Activated CD8-positive, alpha-beta T cell treated with anti-CD3 and anti-CD28 coated beads for 36 hours (primary cell): ENCODE measurements at regions of chr17 and their contacts with region 1.

Region 1: DNA sequence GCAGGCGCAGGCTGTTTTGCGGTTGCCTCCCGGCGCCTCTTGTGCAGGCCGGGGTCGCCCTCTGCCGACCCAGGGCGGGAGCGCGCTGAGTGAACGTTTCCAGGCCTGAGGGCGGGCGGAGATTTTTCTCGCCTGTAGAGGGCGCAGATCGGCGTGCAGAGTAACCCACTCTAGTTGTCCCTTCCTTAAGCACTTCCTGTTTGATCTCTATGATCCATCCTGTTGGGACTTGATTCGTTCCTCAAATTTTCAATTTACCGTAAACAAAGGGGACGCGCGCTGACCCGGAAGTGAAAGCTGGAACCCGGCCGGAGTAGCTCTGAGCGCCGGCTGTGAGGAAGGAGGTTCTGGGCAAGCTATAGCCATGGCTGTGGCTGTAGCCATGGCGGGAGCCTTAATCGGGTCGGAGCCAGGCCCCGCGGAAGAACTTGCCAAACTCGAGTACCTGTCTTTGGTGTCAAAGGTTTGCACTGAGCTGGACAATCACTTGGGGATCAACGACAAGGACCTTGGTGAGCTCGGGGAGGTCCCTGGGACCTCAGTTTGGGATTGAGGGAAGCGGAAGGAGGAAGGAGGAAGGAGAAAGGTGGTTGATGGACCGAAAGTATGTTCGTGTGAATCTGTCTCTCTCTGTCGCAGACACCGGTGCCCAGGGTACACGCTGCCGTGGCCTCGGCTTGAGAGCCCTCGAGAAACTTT is at the start of gene DHX8:
- DNase-seq: peak; percentile 99
- ATAC-seq: peak; percentile 98
- H3K4me3 Mint-ChIP-seq: peak within 1 kb of the TSS; percentile 100
- H3K27ac Mint-ChIP-seq: peak within 1 kb of the TSS; percentile 98
- H3K4me1 Mint-ChIP-seq: peaks cover 30% of the 10 kb centered on the region
- H3K27me3 Mint-ChIP-seq: no peaks in the 10 kb centered on the region
- CTCF ChIP-seq: peak; percentile 99
- total RNA-seq, gene DHX8: 43.0 to 45.1 TPM

Region 2: DNA sequence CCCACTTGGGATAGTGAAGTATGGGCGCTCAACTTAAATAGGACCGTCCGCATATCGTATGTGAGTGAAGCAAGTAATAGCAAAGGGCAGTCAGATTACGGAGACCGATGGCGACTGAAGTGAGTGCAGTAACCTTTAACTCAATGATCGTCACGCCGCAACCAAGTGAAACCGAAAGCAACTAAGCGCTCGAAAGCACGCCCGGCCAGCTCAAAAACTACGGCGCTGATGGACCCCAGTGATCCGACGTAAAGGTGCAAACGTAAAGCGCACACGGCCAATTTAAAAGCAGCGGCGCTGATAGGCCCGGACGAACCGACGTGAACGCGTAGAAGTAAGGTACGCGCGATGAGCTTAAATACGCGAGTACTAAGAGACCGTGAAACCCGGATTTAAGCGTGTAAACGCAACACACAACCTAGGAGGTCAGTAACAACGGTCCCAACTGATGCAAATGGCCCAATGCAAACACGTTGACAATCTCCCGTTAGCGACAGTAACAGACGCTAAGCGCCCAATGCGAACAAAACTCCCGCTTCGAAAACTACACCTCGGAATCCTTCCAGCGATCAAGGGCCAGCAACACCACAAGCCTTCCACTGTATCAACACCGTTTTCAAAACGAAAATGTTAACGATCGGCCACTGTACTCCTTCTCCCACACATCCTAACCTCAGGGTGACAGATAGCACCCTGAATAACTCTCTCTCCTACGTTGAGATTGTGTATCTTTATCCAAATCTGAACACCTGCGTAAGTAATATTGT is 122.9 kb before region 1 on chr17:
- CTCF ChIA-PET with region 1: interaction called, 34 read pairs
- POLR2A ChIA-PET with region 1: interaction called, 27 read pairs
- intact Hi-C with region 1: no loop called
- DNase-seq: peak; percentile 97
- ATAC-seq: peak; percentile 86
- H3K4me3 Mint-ChIP-seq: peak overlapping the region; percentile 83
- H3K27ac Mint-ChIP-seq: peak overlapping the region; percentile 99
- H3K4me1 Mint-ChIP-seq: peaks cover 43% of the 10 kb centered on the region
- H3K27me3 Mint-ChIP-seq: peaks cover 4% of the 10 kb centered on the region
- CTCF ChIP-seq: no peak

Region 3: GRCh38 chr17:43381204-43381603 is 102.6 kb before region 1 on chr17:
- CTCF ChIA-PET with region 1: interaction called, 63 read pairs
- POLR2A ChIA-PET with region 1: interaction called, 5 read pairs
- intact Hi-C with region 1: no loop called
- DNase-seq: no peak
- ATAC-seq: no peak
- H3K4me3 Mint-ChIP-seq: no peak overlapping the region
- H3K27ac Mint-ChIP-seq: no peak overlapping the region
- H3K4me1 Mint-ChIP-seq: no peaks in the 10 kb centered on the region
- H3K27me3 Mint-ChIP-seq: no peaks in the 10 kb centered on the region
- CTCF ChIP-seq: no peak

Region 4: GRCh38 chr17:43393944-43394482 is 89.8 kb before region 1 on chr17:
- CTCF ChIA-PET with region 1: interaction called, 338 read pairs
- POLR2A ChIA-PET with region 1: interaction called, 54 read pairs
- intact Hi-C with region 1: loop called (anchors 1 kb)
- DNase-seq: peak; percentile 97
- ATAC-seq: peak; percentile 41
- H3K4me3 Mint-ChIP-seq: no peak overlapping the region
- H3K27ac Mint-ChIP-seq: peak overlapping the region; percentile 20
- H3K4me1 Mint-ChIP-seq: peaks cover 15% of the 10 kb centered on the region
- H3K27me3 Mint-ChIP-seq: no peaks in the 10 kb centered on the region
- CTCF ChIP-seq: peak; percentile 87

Region 5: DNA sequence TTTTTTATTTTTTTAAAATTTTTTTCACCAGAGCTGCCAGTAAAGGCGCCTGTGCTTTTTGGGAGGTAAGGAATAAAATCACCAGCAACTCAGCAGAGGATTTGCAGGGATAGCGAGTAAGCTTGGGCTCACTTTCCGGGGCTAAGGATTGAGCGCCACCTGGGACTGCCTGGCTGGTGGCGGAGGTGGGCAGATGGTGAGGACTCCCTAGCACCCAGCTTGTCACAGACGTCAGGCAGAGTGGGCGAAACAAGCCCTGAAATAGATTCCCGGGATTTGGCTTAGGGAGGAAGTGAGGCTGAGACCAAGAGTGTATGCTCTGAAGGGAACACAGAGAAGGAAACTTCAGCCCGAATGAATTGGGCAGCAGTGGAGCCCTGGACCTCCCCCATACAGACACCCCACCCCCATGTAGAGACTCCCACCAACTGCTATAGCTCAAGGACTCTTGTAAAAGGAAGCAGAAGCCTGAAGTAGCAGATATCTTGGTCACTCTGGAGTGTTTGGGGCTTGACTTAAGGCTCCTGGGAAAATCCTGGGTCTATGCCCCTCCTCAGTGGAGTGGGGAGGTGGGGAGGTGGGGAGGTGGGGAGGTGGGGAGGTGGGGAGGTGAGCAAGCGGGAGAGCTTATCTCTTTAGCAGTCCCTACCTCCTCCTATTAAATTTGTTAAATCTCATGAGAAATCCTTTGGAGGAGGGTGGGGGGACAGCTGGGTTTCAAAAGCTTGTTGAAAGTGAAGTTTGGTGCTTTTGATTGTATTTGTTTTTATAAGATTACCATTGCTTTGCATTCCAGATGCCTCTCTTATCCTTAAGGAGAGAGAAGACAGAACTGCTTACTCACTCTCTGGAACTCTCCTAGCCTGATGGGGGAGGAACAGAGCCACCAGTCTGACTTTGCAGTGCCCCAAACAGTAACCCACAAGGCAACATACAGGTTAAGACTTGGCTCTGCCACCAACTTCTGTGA is 76.9 kb before region 1 on chr17:
- CTCF ChIA-PET with region 1: interaction called, 35 read pairs
- POLR2A ChIA-PET with region 1: interaction called, 6 read pairs
- intact Hi-C with region 1: no loop called
- DNase-seq: no peak
- ATAC-seq: no peak
- H3K4me3 Mint-ChIP-seq: no peak overlapping the region
- H3K27ac Mint-ChIP-seq: no peak overlapping the region
- H3K4me1 Mint-ChIP-seq: no peaks in the 10 kb centered on the region
- H3K27me3 Mint-ChIP-seq: peaks cover 2% of the 10 kb centered on the region
- CTCF ChIP-seq: no peak

Region 6: GRCh38 chr17:43457362-43457692 is 26.5 kb before region 1 on chr17:
- CTCF ChIA-PET with region 1: interaction called, 11 read pairs
- POLR2A ChIA-PET with region 1: interaction called, 4 read pairs
- intact Hi-C with region 1: no loop called
- DNase-seq: no peak
- ATAC-seq: no peak
- H3K4me3 Mint-ChIP-seq: no peak overlapping the region
- H3K27ac Mint-ChIP-seq: no peak overlapping the region
- H3K4me1 Mint-ChIP-seq: peaks cover 9% of the 10 kb centered on the region
- H3K27me3 Mint-ChIP-seq: peaks cover 6% of the 10 kb centered on the region
- CTCF ChIP-seq: no peak

Region 7: DNA sequence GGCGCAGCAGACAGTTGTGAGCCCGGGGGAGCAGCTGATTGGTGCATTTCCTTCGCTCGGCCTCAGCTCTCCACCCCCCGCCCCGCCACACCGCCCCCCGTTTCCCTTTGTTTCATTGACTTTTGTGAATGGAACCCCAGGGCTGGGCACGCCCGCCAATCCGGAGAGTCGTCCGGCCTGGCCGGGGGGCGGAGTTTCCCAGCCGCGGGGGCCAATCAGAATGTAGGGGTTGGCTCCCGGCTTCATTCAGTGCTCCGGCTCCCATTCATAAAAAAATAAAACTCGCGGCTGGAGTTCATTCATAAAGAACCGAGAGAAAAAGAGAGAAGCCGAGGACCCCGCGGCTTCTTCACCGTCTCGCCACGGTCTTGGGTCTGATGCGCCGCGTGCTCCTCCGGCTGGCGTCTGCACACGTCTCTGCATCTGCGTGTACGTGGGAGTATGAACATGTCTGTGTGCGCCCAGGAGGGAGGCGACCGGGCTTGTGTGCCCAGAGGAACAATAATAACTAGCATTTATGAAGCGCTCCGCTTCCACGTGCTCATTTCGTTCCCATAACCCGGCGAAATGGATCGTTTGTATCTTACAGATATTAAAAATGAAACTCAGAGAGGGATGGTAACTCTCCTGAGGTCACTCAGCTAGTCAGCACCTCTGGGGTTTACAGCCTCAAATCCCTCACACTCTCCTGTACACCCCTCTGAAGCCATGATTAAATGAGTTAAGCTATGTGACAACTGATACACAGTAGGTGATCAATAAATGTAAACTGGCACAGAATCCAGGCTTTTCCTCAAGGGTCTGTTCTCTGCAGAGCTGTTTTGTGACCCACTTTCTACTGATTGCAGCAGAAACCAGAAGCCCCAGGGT is 62.7 kb after region 1 on chr17 and contains the start of gene ETV4:
- CTCF ChIA-PET with region 1: interaction called, 10 read pairs
- POLR2A ChIA-PET with region 1: interaction called, 3 read pairs
- intact Hi-C with region 1: no loop called
- DNase-seq: peak; percentile 98
- ATAC-seq: peak; percentile 93
- H3K4me3 Mint-ChIP-seq: peak within 1 kb of the TSS; percentile 76
- H3K27ac Mint-ChIP-seq: no peak within 1 kb of the TSS
- H3K4me1 Mint-ChIP-seq: peaks cover 21% of the 10 kb centered on the region
- H3K27me3 Mint-ChIP-seq: peaks cover 42% of the 10 kb centered on the region
- CTCF ChIP-seq: no peak
- total RNA-seq, gene ETV4: 5.0 to 5.4 TPM

Region 8: GRCh38 chr17:43599835-43600234 is 116.0 kb after region 1 on chr17:
- CTCF ChIA-PET with region 1: no interaction called
- POLR2A ChIA-PET with region 1: no interaction called
- intact Hi-C with region 1: no loop called
- DNase-seq: no peak
- ATAC-seq: no peak
- H3K4me3 Mint-ChIP-seq: no peak overlapping the region
- H3K27ac Mint-ChIP-seq: no peak overlapping the region
- H3K4me1 Mint-ChIP-seq: no peaks in the 10 kb centered on the region
- H3K27me3 Mint-ChIP-seq: no peaks in the 10 kb centered on the region
- CTCF ChIP-seq: no peak